GM12878 (cell line): ENCODE measurements at regions of chr7 and their contacts with region 1.

Region 1: DNA sequence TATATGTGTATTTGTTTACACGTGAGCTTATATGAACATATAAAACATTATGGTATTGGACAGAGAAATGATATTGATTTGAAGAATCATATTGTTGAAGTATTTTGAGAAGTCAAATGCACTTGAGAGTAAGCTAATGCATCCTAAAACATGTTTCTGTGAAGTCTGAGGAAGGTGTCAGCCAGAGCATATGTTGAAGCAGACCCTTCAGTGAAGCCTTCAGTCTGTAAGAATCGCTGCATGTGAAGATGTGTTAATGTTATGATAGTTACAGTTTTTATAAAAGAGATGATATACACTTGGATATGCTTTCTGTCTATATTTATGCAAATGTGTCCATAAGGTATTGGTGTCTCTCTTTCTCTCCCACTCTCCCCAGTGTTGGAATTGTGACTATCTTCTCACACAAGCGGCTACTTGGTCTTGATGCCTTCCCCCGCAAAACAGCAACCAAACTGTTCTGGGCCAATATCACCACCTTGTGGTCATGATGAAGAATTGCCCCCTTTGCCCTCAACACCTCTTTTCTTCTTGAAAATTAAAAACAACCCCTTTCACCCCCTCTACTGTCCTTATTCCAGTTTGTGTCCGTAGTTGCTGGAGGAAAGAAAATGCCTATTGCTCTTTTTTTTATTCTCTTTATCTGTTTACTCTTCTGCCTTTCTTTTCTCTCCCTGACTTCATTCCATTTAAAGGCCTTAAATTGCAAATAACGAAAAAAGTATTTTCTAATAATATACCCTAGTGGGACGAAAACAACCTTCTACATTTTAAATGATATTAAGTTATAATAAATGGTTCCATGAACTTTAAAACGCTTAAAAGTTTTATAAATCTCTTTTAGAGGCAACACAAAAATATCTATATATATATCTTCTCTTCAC is 64.9 kb downstream of the IKZF1 start:
- DNase-seq: peak; percentile 51
- ATAC-seq: peak; percentile 77
- H3K4me3 ChIP-seq: no peak overlapping the region
- H3K27ac ChIP-seq: peak overlapping the region; percentile 17; the same call in 1 of the 2 replicates
- H3K4me1 ChIP-seq: peaks cover 23% of the 10 kb centered on the region
- H3K27me3 ChIP-seq: no peaks in the 10 kb centered on the region
- CTCF ChIP-seq: peak; percentile 70 to 82 (median 81)
- EP300 ChIP-seq: no peak
- POLR2A ChIP-seq: no peak
- RAD21 ChIP-seq: peak; percentile 96

Region 2: DNA sequence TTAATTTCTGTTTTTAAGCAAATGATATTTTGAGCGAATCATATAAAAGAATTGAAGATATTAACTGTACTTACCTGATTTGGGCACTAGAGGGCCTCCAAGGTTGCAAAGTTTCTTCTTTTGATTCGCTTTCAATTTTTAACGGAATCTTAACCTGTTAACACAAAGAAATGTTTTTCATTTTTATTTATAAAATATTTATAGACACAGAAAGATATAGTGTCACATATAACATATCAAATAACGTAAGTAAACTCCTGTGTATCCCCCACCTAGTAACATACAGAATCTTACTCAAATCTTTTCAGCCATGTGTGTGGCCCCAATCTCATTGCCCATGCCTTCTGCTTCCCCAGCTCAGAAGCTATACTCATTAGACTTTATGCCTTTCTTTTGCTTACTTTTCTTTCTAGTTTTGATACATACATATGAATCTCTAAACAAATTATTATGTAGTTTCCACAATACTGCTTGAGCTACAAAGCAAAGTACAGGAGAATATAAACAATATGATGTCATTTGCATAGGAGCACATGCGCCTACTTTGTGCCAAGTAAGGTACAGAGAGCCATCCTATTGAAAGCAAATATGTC is 226.9 kb before region 1 on chr7:
- CTCF ChIA-PET with region 1: interaction called, 96 read pairs
- POLR2A ChIA-PET with region 1: no interaction called
- RAD21 ChIA-PET with region 1: interaction called, 37 read pairs
- SMC1A ChIA-PET with region 1: interaction called, 102 read pairs
- in situ Hi-C with region 1: no loop called
- intact Hi-C with region 1: loop called (anchors 1 kb)
- DNase-seq: peak; percentile 24
- ATAC-seq: peak; percentile 51
- H3K4me3 ChIP-seq: no peak overlapping the region
- H3K27ac ChIP-seq: no peak overlapping the region
- H3K4me1 ChIP-seq: peaks cover 24% of the 10 kb centered on the region
- H3K27me3 ChIP-seq: no peaks in the 10 kb centered on the region; a peak in 1 of 4 replicates
- CTCF ChIP-seq: peak; percentile 55 to 61 (median 60)
- EP300 ChIP-seq: no peak
- POLR2A ChIP-seq: no peak
- RAD21 ChIP-seq: peak; percentile 85

Region 3: GRCh38 chr7:50229964-50230363 is 139.4 kb before region 1 on chr7:
- CTCF ChIA-PET with region 1: interaction called, 15 read pairs
- POLR2A ChIA-PET with region 1: no interaction called
- RAD21 ChIA-PET with region 1: interaction called, 6 read pairs
- SMC1A ChIA-PET with region 1: interaction called, 12 read pairs
- in situ Hi-C with region 1: no loop called
- intact Hi-C with region 1: no loop called
- DNase-seq: no peak
- ATAC-seq: no peak
- H3K4me3 ChIP-seq: no peak overlapping the region
- H3K27ac ChIP-seq: no peak overlapping the region
- H3K4me1 ChIP-seq: no peaks in the 10 kb centered on the region
- H3K27me3 ChIP-seq: no peaks in the 10 kb centered on the region
- CTCF ChIP-seq: peak; percentile 21 to 58 (median 46); a peak in 5 of 6 replicates
- EP300 ChIP-seq: no peak
- POLR2A ChIP-seq: no peak
- RAD21 ChIP-seq: peak; percentile 58

Region 4: GRCh38 chr7:50304158-50304910 is 65.1 kb before region 1 on chr7 and contains the start of gene IKZF1:
- CTCF ChIA-PET with region 1: interaction called, 59 read pairs
- POLR2A ChIA-PET with region 1: interaction called, 3 read pairs
- RAD21 ChIA-PET with region 1: interaction called, 61 read pairs
- SMC1A ChIA-PET with region 1: interaction called, 73 read pairs
- in situ Hi-C with region 1: no loop called
- intact Hi-C with region 1: loop called (anchors 1 kb)
- DNase-seq: no peak
- ATAC-seq: peak; percentile 41
- H3K4me3 ChIP-seq: peak within 1 kb of the TSS; percentile 79
- H3K27ac ChIP-seq: peak within 1 kb of the TSS; percentile 67
- H3K4me1 ChIP-seq: peaks cover 10% of the 10 kb centered on the region
- H3K27me3 ChIP-seq: no peaks in the 10 kb centered on the region
- CTCF ChIP-seq: no peak; a peak in 1 of 6 replicates
- EP300 ChIP-seq: no peak
- POLR2A ChIP-seq: peak; percentile 33
- RAD21 ChIP-seq: no peak
- polyA plus RNA-seq, gene IKZF1: 27.2 to 29.8 TPM

Region 5: GRCh38 chr7:50335795-50336754 is 33.3 kb before region 1 on chr7:
- CTCF ChIA-PET with region 1: interaction called, 13 read pairs
- POLR2A ChIA-PET with region 1: no interaction called
- RAD21 ChIA-PET with region 1: interaction called, 18 read pairs
- SMC1A ChIA-PET with region 1: interaction called, 20 read pairs
- in situ Hi-C with region 1: no loop called
- intact Hi-C with region 1: no loop called
- DNase-seq: no peak
- ATAC-seq: peak; percentile 13
- H3K4me3 ChIP-seq: no peak overlapping the region
- H3K27ac ChIP-seq: peak overlapping the region; percentile 75
- H3K4me1 ChIP-seq: peaks cover 75% of the 10 kb centered on the region
- H3K27me3 ChIP-seq: no peaks in the 10 kb centered on the region
- CTCF ChIP-seq: peak; percentile 4 to 30 (median 16); a peak in 3 of 6 replicates
- EP300 ChIP-seq: no peak
- POLR2A ChIP-seq: peak; percentile 45; the same call in 1 of the 2 replicates
- RAD21 ChIP-seq: peak; percentile 32; the same call in 1 of the 2 replicates

Region 6: DNA sequence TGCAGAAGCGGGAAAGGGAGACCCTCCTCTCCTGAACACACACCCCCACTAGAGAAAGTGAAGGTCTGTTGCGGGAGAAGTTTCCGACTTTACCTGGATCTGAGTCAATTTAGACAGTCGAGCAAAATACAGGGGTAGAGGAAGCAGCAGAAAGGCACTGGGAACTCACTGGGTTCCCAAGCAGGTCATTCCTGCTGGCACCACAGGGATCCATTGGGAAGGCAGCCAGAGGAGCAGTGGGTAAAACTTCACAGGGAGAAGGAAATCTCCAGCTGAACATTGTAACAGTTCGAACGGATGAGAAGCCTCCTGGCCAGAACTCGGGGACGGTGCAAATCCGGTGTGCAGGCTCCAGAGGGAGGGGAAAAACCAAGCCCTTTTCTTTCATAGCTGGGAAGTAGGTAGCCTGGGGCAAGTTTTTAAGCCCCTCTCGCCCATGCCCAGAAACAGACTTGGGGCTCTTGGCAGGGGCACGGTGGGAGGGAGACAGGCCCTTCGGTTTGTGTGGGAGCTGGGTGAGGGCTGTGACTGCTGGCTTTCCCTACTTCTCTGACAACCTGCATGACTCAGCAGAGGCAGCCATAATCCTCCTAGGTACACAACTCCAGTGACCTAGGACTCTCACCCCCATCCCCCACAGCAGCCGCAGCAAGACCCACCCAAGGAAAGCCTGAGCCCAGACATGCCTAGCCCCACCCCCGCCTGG is 143.9 kb after region 1 on chr7:
- CTCF ChIA-PET with region 1: no interaction called
- POLR2A ChIA-PET with region 1: no interaction called
- RAD21 ChIA-PET with region 1: no interaction called
- SMC1A ChIA-PET with region 1: no interaction called
- in situ Hi-C with region 1: no loop called
- intact Hi-C with region 1: no loop called
- DNase-seq: no peak
- ATAC-seq: no peak
- H3K4me3 ChIP-seq: no peak overlapping the region
- H3K27ac ChIP-seq: no peak overlapping the region
- H3K4me1 ChIP-seq: no peaks in the 10 kb centered on the region
- H3K27me3 ChIP-seq: no peaks in the 10 kb centered on the region
- CTCF ChIP-seq: no peak
- EP300 ChIP-seq: no peak
- POLR2A ChIP-seq: no peak
- RAD21 ChIP-seq: no peak